Endothelial cell of umbilical vein (primary cell): ENCODE measurements at regions of chr1 and their contacts with region 1.

Region 1: GRCh38 chr1:7667625-7668218 is 103.4 kb upstream of the VAMP3 start:
- DNase-seq: peak; percentile 77
- H3K4me3 ChIP-seq: no peak overlapping the region
- H3K27ac ChIP-seq: no peak overlapping the region
- H3K4me1 ChIP-seq: no peaks in the 10 kb centered on the region
- H3K27me3 ChIP-seq: no peaks in the 10 kb centered on the region
- CTCF ChIP-seq: peak; percentile 98 to 100
- POLR2A ChIP-seq: no peak

Region 2: GRCh38 chr1:7595336-7595735 is 72.4 kb before region 1 on chr1:
- CTCF ChIA-PET with region 1: no interaction called
- POLR2A ChIA-PET with region 1: no interaction called
- dilution Hi-C with region 1: no loop called
- intact Hi-C with region 1: no loop called
- DNase-seq: no peak
- H3K4me3 ChIP-seq: no peak overlapping the region
- H3K27ac ChIP-seq: no peak overlapping the region
- H3K4me1 ChIP-seq: no peaks in the 10 kb centered on the region
- H3K27me3 ChIP-seq: no peaks in the 10 kb centered on the region
- CTCF ChIP-seq: no peak
- POLR2A ChIP-seq: no peak

Region 3: DNA sequence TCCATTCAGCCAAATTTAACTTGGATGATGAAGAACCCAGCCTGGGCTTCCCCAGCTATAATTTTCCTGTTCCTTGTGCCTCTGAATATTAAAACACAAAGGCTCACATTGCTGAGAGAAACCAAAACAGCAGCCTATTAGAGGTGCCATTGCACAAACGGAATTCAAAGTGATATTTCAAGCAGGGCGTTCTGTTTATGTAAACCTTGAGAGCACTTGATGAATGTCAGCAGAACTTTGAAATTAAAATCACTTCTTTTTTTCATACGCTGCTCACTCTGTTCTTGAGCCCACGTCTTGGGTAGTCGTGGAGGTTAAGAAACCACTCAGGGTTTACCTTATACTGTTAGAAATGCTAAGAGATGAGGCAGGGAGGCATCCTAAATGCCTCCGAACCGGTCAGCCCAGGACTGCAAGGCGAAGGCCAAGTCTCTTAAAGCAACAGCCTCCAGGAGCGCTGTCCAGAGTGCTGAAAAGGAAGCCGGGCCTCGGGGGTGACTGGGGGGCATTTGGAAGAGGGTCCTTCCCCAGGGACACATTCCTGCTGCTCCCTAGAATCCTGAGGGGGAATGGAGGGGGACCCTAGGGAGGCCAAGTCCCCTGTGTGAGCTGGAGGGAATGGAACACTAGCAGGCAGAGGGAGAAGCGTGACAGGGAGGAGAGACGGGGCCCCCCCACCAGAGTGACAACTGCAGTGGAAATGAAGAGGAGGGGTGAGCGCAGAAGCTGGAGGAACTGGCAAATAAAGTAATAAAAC is 51.5 kb before region 1 on chr1:
- CTCF ChIA-PET with region 1: no interaction called
- POLR2A ChIA-PET with region 1: no interaction called
- dilution Hi-C with region 1: no loop called
- intact Hi-C with region 1: no loop called
- DNase-seq: peak; percentile 36
- H3K4me3 ChIP-seq: no peak overlapping the region
- H3K27ac ChIP-seq: no peak overlapping the region
- H3K4me1 ChIP-seq: no peaks in the 10 kb centered on the region
- H3K27me3 ChIP-seq: no peaks in the 10 kb centered on the region
- CTCF ChIP-seq: no peak
- POLR2A ChIP-seq: no peak

Region 4: GRCh38 chr1:7680207-7680954 is 12.7 kb after region 1 on chr1:
- CTCF ChIA-PET with region 1: interaction called, 117 read pairs
- POLR2A ChIA-PET with region 1: no interaction called
- dilution Hi-C with region 1: no loop called
- intact Hi-C with region 1: no loop called
- DNase-seq: peak; percentile 30
- H3K4me3 ChIP-seq: peak overlapping the region; percentile 5 to 69 (median 47)
- H3K27ac ChIP-seq: no peak overlapping the region
- H3K4me1 ChIP-seq: no peaks in the 10 kb centered on the region
- H3K27me3 ChIP-seq: no peaks in the 10 kb centered on the region
- CTCF ChIP-seq: no peak
- POLR2A ChIP-seq: peak; percentile 55

Region 5: DNA sequence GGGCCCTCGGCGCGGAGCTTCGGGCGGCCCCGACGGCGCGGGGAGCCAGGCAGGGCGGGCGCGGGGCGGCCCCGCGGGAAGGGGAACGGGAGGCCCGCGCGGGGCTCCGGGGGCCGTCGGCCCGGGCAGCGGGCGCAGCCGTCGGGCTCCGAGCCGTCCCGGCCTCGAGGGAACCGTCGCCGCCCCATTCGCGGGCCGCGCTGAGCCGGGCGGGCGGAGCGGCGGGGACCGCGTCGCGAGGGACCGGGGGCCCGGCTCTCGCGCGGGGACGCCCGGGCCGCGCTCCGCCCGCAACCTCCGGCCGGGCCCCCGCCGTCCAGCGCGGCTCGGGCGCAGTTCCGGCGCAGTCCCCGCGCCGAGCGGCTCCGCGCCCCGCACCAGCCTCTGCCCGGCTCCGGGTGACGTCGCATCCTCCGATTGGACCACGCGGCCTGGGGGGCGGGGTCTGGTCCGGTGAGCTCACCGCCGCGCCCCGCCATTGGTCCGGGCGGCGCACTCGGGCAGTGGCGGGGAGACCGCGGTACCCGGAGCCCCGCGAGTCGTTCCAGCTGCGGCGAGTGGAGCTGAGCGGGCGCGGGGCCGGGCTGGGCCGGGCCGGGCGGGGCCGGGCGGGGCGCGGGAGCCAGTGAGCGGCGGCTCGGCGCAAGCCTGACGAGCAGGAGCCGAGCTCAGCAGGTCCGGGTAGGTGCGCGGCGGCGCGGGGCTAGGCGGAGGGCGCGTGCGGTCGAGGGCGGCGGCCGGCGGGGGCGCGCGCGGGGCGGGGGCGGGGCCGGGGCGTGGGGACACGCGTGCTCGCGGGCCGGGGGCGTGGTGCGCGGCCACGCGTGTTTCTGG is 36.7 kb after region 1 on chr1:
- CTCF ChIA-PET with region 1: interaction called, 37 read pairs
- POLR2A ChIA-PET with region 1: no interaction called
- dilution Hi-C with region 1: no loop called
- intact Hi-C with region 1: loop called (anchors 2 kb)
- DNase-seq: peak; percentile 89
- H3K4me3 ChIP-seq: peak overlapping the region in 1 of 3 experiments; percentile 24
- H3K27ac ChIP-seq: no peak overlapping the region
- H3K4me1 ChIP-seq: no peaks in the 10 kb centered on the region
- H3K27me3 ChIP-seq: peaks cover 21 to 31% of the 10 kb centered on the region in 2 experiments
- CTCF ChIP-seq: no peak
- POLR2A ChIP-seq: no peak

Region 6: GRCh38 chr1:7752512-7753417 is 85.0 kb after region 1 on chr1:
- CTCF ChIA-PET with region 1: interaction called, 674 read pairs
- POLR2A ChIA-PET with region 1: no interaction called
- dilution Hi-C with region 1: no loop called
- intact Hi-C with region 1: loop called (anchors 1 kb)
- DNase-seq: peak; percentile 72
- H3K4me3 ChIP-seq: peak overlapping the region in 2 of 3 experiments; percentile 18 to 25
- H3K27ac ChIP-seq: no peak overlapping the region
- H3K4me1 ChIP-seq: no peaks in the 10 kb centered on the region
- H3K27me3 ChIP-seq: no peaks in the 10 kb centered on the region
- CTCF ChIP-seq: peak; percentile 68 to 77
- POLR2A ChIP-seq: no peak

Region 7: DNA sequence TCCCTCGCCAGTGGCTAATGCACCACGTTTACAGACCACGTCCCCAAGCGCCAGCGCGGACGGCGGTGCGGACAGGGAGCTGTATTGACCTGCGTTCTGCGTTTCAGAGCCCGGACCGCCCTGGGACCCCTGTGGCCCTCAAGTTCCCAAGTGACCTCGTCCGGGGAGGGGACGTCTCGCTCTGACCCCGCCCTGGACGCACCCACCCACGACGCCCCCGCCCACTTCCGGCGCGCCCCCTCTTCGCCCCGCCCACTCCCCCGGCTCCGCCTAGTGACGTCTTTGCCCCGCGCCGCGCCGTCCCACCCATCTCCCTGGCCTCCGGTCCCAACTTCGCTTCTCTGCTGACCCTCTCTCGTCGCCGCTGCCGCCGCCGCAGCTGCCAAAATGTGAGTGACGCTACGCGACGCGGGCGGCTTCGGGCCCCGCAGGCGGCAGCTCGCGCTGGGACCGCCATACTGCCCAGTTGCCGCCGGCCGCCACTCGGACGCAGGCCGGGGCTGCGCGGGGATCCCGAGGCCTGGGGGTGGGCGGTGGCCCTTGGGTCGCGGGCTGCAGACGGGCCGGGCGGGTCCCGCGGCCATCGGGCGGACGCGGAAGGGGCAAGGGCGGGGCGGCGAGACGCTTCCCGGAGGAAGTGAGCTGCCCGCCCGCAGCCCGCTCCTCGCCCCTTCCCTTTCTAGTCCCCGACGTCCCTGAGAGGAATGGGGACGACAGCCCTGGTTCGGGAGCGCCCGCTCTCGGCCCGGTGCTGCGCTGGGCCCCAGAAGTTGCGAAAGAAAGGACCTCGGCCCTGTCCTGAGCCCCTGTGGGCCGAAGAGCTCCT is 103.5 kb after region 1 on chr1 and contains the start of gene VAMP3:
- CTCF ChIA-PET with region 1: interaction called, 13 read pairs
- POLR2A ChIA-PET with region 1: no interaction called
- dilution Hi-C with region 1: no loop called
- intact Hi-C with region 1: no loop called
- DNase-seq: peak; percentile 83
- H3K4me3 ChIP-seq: peak within 1 kb of the TSS; percentile 86 to 99 (median 96)
- H3K27ac ChIP-seq: peak within 1 kb of the TSS; percentile 74
- H3K4me1 ChIP-seq: peaks cover 12% of the 10 kb centered on the region
- H3K27me3 ChIP-seq: no peaks in the 10 kb centered on the region
- CTCF ChIP-seq: no peak
- POLR2A ChIP-seq: peak; percentile 70
- total RNA-seq, gene VAMP3: 137 and 148 TPM in 2 replicates

Region 8: GRCh38 chr1:7942214-7942921 is 274.6 kb after region 1 on chr1:
- CTCF ChIA-PET with region 1: interaction called, 23 read pairs
- POLR2A ChIA-PET with region 1: no interaction called
- dilution Hi-C with region 1: no loop called
- intact Hi-C with region 1: no loop called
- DNase-seq: peak; percentile 48
- H3K4me3 ChIP-seq: no peak overlapping the region
- H3K27ac ChIP-seq: no peak overlapping the region
- H3K4me1 ChIP-seq: peaks cover 5% of the 10 kb centered on the region
- H3K27me3 ChIP-seq: peaks cover 27 to 49% of the 10 kb centered on the region in 2 experiments
- CTCF ChIP-seq: peak in 1 of 2 donors; percentile 59
- POLR2A ChIP-seq: no peak

Region 9: DNA sequence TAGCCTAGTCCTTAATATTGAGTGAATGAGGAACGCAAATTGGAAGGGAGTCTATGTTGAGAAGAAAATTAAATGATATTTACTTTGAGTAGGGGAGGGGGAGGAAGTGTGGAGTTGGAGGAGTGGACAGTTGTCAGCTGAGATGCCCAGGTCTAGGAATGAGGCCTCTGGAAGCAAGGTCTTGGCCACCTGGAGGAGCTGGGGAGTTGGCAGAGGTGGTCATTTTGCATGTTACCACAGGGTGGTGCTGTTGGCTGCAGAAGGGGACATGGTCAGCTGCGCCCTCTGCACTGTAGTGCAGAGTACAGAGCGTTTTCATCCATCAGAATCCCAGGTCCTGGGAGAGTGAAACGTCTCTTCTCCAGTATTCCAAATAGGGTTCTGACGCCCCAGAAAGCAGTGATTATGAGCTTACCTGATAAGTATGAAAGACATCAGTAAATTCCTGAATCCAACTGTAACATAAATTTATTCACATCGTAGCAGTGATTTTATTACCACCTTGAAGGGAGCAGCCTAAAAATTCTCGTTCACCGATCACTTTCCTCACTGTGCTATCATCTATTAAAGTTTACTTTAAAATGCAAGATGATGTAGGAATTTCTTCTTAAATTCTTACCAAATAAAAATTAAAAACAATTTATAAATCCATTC is 307.6 kb after region 1 on chr1:
- CTCF ChIA-PET with region 1: interaction called, 12 read pairs
- POLR2A ChIA-PET with region 1: no interaction called
- dilution Hi-C with region 1: no loop called
- intact Hi-C with region 1: no loop called
- DNase-seq: peak; percentile 81
- H3K4me3 ChIP-seq: no peak overlapping the region
- H3K27ac ChIP-seq: no peak overlapping the region
- H3K4me1 ChIP-seq: no peaks in the 10 kb centered on the region
- H3K27me3 ChIP-seq: no peaks in the 10 kb centered on the region
- CTCF ChIP-seq: peak; percentile 85 to 94
- POLR2A ChIP-seq: no peak